ENCODE measurements at regions of chr22 and their contacts with region 1.

Region 1: DNA sequence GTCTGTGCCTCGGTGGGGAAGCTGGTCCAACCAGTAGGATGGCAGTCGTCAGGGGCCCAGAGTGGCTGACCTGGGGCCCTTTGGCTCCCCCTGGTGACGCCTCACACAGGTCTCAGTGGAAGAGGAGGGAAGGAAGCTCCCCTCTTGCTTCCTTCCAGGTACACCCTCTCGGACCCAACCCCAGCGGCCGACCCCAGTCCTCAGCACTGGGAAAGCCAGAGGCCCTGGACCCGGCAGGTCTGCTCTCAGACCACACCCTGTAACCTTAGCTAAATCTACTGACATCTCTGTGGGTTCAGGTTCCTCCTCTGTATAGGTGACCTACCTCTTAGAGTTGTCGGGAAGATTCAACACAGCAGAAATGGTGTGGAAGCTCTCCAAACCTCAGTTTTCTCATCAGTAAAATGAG is 3.4 kb upstream of the SCUBE1 start:
- DNase-seq: peak; percentile 77

Region 2: DNA sequence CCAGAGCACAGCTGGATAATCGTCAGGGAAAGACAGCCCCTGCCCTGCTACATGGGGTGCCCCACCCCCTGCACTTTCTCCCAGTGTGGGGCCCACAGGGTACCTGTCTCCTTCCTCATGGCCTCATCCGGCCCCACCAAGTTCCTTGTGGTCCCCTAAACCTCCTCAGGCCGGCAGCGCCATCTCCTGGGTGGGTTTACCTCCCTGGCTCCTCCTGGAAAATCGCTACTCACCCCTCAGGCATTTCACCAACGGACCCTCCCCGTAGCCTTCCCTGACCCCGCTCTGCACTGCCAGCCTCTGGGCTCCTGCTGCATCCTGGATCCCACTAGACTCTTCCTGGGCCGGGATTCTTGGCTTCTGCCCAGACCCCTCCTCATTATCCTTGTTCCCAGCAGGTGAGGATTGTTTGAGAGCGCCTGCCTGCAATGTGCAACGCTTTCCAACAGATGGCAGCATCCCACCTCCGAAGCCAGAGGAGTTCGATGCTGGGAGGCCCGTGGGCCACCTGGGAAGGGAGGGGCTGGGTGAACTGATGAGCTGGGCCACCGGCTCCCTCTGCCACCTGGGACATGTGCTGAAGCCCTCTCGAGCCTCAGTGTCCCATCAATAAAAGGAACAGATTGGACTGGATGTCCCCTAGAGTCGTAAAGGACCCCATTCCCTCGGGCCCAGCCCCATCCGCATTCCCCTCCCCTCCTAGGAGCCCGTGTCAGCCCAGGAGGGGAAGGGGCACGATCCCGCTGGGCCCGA is 115.4 kb before region 1 on chr22:
- intact Hi-C with region 1: loop called (anchors 2 kb)
- DNase-seq: no peak

Region 3: DNA sequence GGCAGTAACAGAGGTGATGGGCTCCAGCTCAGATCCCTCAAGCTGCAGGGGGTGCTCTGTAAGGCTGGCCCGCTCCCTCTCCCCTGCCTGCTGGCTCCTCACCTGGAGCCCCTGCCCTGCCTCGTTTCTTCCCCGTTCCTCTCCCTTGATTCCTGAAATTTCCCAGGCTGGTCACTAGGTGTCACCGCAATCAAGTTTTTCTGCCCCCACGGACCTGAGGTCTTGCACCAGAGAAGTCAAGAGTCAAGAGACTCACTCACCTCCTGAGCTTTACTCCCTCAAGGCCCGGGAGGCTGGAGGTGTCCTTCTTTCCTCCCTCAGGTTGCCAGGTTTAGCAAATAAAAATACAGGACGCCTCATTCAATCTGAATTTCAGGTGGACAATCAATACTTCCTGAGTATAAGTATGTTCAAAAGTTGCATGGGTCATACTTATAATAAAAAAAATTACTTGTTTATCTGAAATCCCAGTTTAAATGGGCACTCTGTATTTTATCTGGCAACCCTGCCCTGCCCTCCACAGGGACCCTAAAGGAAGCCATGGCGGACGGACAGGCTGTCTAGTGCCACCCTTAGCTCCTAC is 72.5 kb before region 1 on chr22:
- intact Hi-C with region 1: loop called (anchors 1 kb)
- DNase-seq: no peak

Region 4: GRCh38 chr22:43293655-43294392 is 52.7 kb before region 1 on chr22:
- intact Hi-C with region 1: loop called (anchors 5 kb)
- DNase-seq: no peak

Region 5: GRCh38 chr22:43501878-43502277 is 155.4 kb after region 1 on chr22:
- intact Hi-C with region 1: no loop called
- DNase-seq: no peak

Measured in cardiac septum (tissue), 1 donor.